Panc1 (cell line): ENCODE measurements at regions of chr14 and their contacts with region 1.

Region 1: DNA sequence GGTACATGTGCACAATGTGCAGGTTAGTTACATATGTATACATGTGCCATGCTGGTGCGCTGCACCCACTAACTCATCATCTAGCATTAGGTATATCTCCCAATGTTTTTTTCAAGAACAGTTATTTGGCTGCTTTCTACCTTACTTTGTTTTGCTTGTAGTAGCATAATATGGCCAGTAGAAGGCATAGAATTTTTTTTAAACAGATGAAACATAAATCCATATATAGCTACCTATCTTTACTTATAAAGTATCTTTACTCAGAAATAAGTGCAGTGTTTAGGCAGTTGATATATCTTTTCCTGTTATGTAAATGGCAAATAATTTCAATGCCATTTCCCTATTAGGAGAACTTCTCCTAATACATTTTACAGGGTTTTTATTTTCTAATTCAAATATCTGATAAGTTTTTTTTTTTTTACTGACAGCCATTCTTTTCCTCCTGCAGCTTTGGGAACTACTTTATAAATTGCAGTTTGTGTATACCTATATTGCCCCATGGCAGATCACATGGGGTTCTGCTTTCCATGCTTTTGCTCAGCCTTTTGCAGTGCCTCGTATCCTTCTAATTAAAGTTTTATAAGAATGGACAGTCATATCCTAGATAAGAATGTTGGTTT is 143.1 kb downstream of the PCNX1 start:
- DNase-seq: no peak
- ATAC-seq: no peak
- H3K4me3 ChIP-seq: no peak overlapping the region
- H3K27ac ChIP-seq: no peak overlapping the region
- H3K4me1 ChIP-seq: no peaks in the 10 kb centered on the region
- H3K27me3 ChIP-seq: no peaks in the 10 kb centered on the region
- CTCF ChIP-seq: peak; percentile 42; the same call in 1 of the 2 replicates

Region 2: DNA sequence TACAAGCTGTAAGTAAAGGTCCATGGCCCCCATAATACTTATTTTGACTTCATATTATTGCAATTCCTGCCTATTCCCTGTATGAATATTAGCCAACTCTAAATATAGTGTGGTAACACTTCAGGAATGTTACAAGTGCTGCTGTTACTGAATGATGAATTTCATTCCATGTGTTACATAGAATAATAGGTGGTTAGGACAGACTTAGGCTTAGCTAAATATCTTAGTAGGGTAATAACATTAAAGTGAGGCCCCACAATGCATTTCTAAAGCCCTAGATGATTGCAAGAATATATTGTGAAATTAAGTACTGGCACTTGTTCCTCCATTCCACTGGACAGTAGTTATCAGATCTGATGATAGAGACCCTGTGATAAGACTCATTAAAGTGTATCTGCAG is 39.7 kb after region 1 on chr14:
- CTCF ChIA-PET with region 1: no interaction called
- POLR2A ChIA-PET with region 1: no interaction called
- in situ Hi-C with region 1: no loop called
- intact Hi-C with region 1: no loop called
- DNase-seq: no peak
- ATAC-seq: no peak
- H3K4me3 ChIP-seq: no peak overlapping the region
- H3K27ac ChIP-seq: no peak overlapping the region
- H3K4me1 ChIP-seq: no peaks in the 10 kb centered on the region
- H3K27me3 ChIP-seq: no peaks in the 10 kb centered on the region
- CTCF ChIP-seq: no peak

Region 3: GRCh38 chr14:71240171-71240570 is 189.9 kb after region 1 on chr14:
- CTCF ChIA-PET with region 1: no interaction called
- POLR2A ChIA-PET with region 1: interaction called, 17 read pairs
- in situ Hi-C with region 1: no loop called
- intact Hi-C with region 1: no loop called
- DNase-seq: no peak
- ATAC-seq: no peak
- H3K4me3 ChIP-seq: no peak overlapping the region
- H3K27ac ChIP-seq: no peak overlapping the region
- H3K4me1 ChIP-seq: no peaks in the 10 kb centered on the region
- H3K27me3 ChIP-seq: no peaks in the 10 kb centered on the region
- CTCF ChIP-seq: no peak